A673 (cell line): ENCODE measurements at regions of chr17 and their contacts with region 1.

Region 1: DNA sequence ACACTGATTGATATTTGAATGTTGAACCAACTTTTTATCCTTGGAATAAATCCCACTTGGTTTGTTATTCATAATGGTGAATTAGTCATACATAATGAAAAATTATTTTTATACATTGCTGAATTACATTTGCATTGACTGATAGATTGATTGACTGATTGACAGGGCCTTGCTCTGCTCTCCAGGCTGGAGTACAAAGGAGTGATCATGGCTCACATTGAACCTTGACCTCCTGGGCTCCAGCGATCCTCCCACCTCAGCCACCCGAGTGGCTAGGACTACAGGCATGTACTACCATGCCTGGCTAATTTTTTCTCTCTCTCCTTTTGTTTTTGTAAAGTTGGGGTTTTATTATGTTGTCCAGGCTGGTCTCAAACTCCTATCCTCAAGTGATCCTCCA is 97.8 kb downstream of the ARHGAP44 start:
- DNase-seq: no peak
- H3K4me3 ChIP-seq: no peak overlapping the region
- H3K27ac ChIP-seq: no peak overlapping the region
- H3K4me1 ChIP-seq: no peaks in the 10 kb centered on the region
- H3K27me3 ChIP-seq: no peaks in the 10 kb centered on the region
- CTCF ChIP-seq: no peak

Region 2: DNA sequence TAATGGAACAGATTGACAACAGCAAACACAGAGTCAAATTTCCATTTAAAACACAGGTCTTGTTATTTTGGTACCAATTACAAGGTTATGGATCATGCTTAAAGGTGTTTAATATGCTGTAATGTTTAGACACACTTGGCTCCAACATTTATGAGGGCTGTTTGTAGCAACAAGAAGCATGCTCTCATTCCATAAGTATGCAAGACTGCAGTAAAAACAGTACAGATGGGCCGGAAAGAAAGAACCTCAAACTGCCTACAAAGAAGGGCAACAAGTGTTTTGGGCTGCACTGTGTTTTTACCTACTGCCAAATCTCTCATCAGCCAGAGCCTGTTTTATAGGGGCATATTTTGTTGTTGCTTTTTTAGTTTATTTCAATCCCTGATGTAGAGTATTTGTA is 815.2 kb after region 1 on chr17:
- CTCF ChIA-PET with region 1: no interaction called
- POLR2A ChIA-PET with region 1: interaction called, 18 read pairs
- intact Hi-C with region 1: no loop called
- DNase-seq: no peak
- H3K4me3 ChIP-seq: no peak overlapping the region
- H3K27ac ChIP-seq: no peak overlapping the region
- H3K4me1 ChIP-seq: no peaks in the 10 kb centered on the region
- H3K27me3 ChIP-seq: no peaks in the 10 kb centered on the region
- CTCF ChIP-seq: no peak